K562 (cell line): ENCODE measurements at regions of chr1 and their contacts with region 1.

Region 1: GRCh38 chr1:9455487-9456234 is 83.6 kb upstream of the SLC25A33 start:
- DNase-seq: peak; percentile 64 to 76 (median 68)
- ATAC-seq: peak; percentile 95
- H3K4me3 ChIP-seq: no peak overlapping the region
- H3K27ac ChIP-seq: no peak overlapping the region
- H3K4me1 ChIP-seq: no peaks in the 10 kb centered on the region
- H3K27me3 ChIP-seq: peaks cover 49 to 76% of the 10 kb centered on the region in 2 experiments
- CTCF ChIP-seq: peak; percentile 81 to 91 (median 90)
- EP300 ChIP-seq: no peak
- POLR2A ChIP-seq: no peak
- RAD21 ChIP-seq: peak; percentile 88 to 95

Region 2: DNA sequence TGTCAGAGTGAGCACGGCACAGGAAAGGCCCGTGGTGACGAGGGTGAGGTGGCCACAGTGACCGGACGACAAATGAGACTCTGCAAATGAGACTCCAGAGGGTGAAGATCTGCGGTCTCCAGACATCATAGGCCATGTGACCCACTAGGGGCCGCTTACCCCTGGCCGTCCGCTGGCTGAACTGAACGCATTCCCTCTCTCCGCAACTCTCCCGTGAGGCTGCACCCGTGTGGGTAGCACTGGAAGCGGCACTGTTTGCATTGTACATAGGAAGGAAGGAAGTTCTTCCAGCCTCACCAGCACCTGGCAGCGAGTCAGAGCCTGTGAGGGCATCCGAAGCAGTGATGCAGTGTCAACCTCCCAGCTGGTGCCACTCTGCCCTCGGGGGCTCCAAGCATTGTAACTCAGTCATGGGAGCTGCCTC is 186.6 kb before region 1 on chr1:
- CTCF ChIA-PET with region 1: interaction called, 31 read pairs
- POLR2A ChIA-PET with region 1: no interaction called
- in situ Hi-C with region 1: no loop called
- intact Hi-C with region 1: loop called (anchors 5 kb)
- DNase-seq: no peak
- ATAC-seq: peak; percentile 36; the same call in 2 of the 3 replicates
- H3K4me3 ChIP-seq: no peak overlapping the region
- H3K27ac ChIP-seq: no peak overlapping the region
- H3K4me1 ChIP-seq: peaks cover 0 to 9% of the 10 kb centered on the region in 2 experiments; a peak in 2 of 5 replicates
- H3K27me3 ChIP-seq: peaks cover 64 to 83% of the 10 kb centered on the region in 2 experiments
- CTCF ChIP-seq: no peak
- EP300 ChIP-seq: no peak
- POLR2A ChIP-seq: no peak
- RAD21 ChIP-seq: no peak

Region 3: GRCh38 chr1:9413148-9413876 is 42.3 kb before region 1 on chr1:
- CTCF ChIA-PET with region 1: no interaction called
- POLR2A ChIA-PET with region 1: no interaction called
- in situ Hi-C with region 1: no loop called
- intact Hi-C with region 1: no loop called
- DNase-seq: peak in 2 of 4 experiments; percentile 61 to 64
- ATAC-seq: peak; percentile 80
- H3K4me3 ChIP-seq: no peak overlapping the region
- H3K27ac ChIP-seq: no peak overlapping the region
- H3K4me1 ChIP-seq: peaks cover 0 to 17% of the 10 kb centered on the region in 2 experiments; a peak in 3 of 5 replicates
- H3K27me3 ChIP-seq: peaks cover 26 to 51% of the 10 kb centered on the region in 2 experiments; a peak in 4 of 5 replicates
- CTCF ChIP-seq: no peak
- EP300 ChIP-seq: no peak
- POLR2A ChIP-seq: no peak
- RAD21 ChIP-seq: no peak

Region 4: DNA sequence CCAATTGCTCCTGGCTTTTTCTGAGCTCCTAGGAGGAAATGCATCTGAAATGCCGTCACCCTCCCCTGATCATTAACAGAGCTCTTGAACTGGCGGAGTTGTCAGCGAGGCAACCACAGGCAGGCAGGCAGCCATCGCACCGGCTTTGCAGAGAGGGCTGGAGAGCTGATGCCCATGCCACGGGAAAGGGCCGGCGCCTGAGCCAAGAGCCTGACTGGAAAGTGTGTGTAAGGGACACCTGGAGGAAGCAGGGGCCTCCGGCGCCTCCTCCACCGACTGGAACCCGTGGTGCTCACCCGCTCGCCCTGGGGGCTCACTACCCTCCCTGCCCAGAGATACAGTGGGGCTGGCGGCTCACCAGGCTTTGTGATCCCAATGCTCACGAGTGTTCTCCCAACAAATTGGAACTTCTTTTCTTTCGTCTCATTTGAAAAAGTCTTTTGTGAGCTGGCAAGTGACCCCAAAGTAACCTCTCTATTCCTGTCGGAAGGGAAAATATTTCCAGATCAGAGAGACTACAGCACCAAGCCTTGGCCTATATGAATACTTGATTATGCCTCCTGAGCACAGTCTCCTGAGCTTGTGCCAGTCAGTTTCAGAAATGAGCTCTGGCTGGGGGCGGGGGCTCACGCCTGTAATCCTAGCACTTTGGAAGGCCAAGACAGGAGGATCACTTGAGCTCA is 14.1 kb before region 1 on chr1:
- CTCF ChIA-PET with region 1: no interaction called
- POLR2A ChIA-PET with region 1: interaction called, 10 read pairs
- in situ Hi-C with region 1: no loop called
- intact Hi-C with region 1: no loop called
- DNase-seq: no peak
- ATAC-seq: no peak; the same call in 2 of the 3 replicates
- H3K4me3 ChIP-seq: no peak overlapping the region
- H3K27ac ChIP-seq: no peak overlapping the region
- H3K4me1 ChIP-seq: peaks cover 5% of the 10 kb centered on the region in 2 experiments; a peak in 4 of 5 replicates
- H3K27me3 ChIP-seq: peaks cover 47 to 81% of the 10 kb centered on the region in 2 experiments
- CTCF ChIP-seq: no peak
- EP300 ChIP-seq: no peak
- POLR2A ChIP-seq: no peak
- RAD21 ChIP-seq: no peak